ENCODE measurements at regions of chr17 and their contacts with region 1.

Region 1: GRCh38 chr17:36705874-36706731 is 104.7 kb downstream of the MRM1 start:
- DNase-seq: peak; percentile 45
- ATAC-seq: peak; percentile 54
- H3K4me3 ChIP-seq: no peak overlapping the region
- H3K4me3 Mint-ChIP-seq: no peak overlapping the region
- H3K27ac ChIP-seq: no peak overlapping the region
- H3K27ac Mint-ChIP-seq: no peak overlapping the region
- H3K4me1 ChIP-seq: no peaks in the 10 kb centered on the region
- H3K4me1 Mint-ChIP-seq: no peaks in the 10 kb centered on the region
- H3K27me3 ChIP-seq: peaks cover 0 to 26% (median 1%) of the 10 kb centered on the region in 4 experiments
- H3K27me3 Mint-ChIP-seq: peaks cover 40% of the 10 kb centered on the region
- CTCF ChIP-seq: peak; percentile 76

Region 2: DNA sequence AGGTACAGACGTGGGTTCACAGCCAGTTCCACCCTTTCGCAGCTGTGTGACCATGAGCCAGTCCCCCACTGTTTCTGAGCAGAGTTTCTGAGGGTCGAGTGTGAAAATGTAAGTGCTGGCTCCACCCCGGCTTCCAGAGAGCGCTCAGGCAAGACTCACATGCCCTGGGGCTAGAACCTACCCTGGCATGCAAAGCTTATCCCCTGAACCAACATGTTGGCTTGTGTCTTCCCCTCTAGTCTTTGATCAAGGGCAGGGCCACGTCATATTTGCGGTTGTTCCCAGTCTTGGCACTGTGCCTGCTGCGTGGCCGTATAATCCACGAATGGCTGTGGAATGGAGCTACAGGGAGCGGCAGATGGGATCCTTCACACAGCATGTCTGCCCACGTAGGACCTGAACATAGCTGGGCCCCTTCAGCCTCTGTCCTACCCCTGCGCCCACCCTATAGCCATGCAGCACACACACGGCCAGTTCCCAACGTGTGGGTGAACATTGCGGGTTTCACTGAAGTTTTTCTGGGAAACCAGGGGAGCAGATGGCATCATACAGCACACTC is 19.9 kb before region 1 on chr17:
- CTCF ChIA-PET with region 1: no interaction called
- POLR2A ChIA-PET with region 1: no interaction called
- intact Hi-C with region 1: no loop called
- DNase-seq: no peak
- ATAC-seq: no peak
- H3K4me3 ChIP-seq: no peak overlapping the region
- H3K4me3 Mint-ChIP-seq: no peak overlapping the region
- H3K27ac ChIP-seq: no peak overlapping the region
- H3K27ac Mint-ChIP-seq: no peak overlapping the region
- H3K4me1 ChIP-seq: no peaks in the 10 kb centered on the region
- H3K4me1 Mint-ChIP-seq: no peaks in the 10 kb centered on the region
- H3K27me3 ChIP-seq: peaks cover 0 to 13% (median 0%) of the 10 kb centered on the region in 4 experiments
- H3K27me3 Mint-ChIP-seq: peaks cover 40% of the 10 kb centered on the region
- CTCF ChIP-seq: no peak

Region 3: DNA sequence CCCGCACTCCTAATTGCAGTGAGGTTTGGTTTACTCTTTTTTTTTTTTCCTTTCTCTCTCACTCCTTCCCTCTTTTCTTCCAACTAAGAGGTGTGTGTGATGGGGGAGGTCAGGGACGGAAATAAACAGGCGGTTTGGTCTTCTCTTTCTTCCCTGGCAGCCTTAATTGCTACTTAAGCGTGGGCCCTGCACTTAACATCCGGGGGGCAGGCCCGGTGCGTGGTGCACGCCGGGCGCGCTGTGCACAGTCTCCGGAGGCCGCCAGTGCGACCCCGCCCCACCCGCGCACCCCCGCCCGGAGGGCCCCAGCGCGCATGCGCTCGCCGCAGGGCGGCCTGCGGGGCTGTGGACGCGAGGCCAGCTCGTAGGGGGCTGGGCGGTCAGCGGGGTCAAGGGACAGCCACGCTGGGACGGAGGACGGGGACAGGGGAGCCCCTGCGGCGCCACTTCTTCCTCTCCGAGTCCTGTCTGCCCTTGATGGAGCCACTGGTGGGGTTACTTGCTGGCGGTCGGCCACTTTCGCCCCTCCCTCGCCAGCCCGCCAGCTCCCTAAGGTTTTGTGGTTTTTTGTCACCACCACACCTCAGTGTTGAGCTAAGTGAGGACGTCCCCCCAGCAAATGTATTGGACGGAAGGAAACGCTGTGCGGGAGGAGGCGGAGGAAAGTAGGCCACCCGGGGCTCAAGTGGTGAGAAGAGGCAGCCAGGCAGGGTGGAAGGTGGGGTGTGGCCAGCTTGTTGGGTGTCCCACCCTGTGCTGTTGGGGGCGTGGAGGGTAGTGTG is 16.2 kb after region 1 on chr17:
- CTCF ChIA-PET with region 1: interaction called, 12 read pairs
- POLR2A ChIA-PET with region 1: no interaction called
- intact Hi-C with region 1: no loop called
- DNase-seq: peak; percentile 81
- ATAC-seq: peak; percentile 94
- H3K4me3 ChIP-seq: peak overlapping the region in 4 of 5 experiments; percentile 58 to 80 (median 64)
- H3K4me3 Mint-ChIP-seq: peak overlapping the region; percentile 90
- H3K27ac ChIP-seq: peak overlapping the region; percentile 62 to 77
- H3K27ac Mint-ChIP-seq: peak overlapping the region; percentile 96
- H3K4me1 ChIP-seq: peaks cover 25 to 35% of the 10 kb centered on the region in 2 donors
- H3K4me1 Mint-ChIP-seq: peaks cover 55% of the 10 kb centered on the region
- H3K27me3 ChIP-seq: peaks cover 0 to 5% (median 1%) of the 10 kb centered on the region in 4 experiments
- H3K27me3 Mint-ChIP-seq: peaks cover 9% of the 10 kb centered on the region
- CTCF ChIP-seq: no peak

Region 4: DNA sequence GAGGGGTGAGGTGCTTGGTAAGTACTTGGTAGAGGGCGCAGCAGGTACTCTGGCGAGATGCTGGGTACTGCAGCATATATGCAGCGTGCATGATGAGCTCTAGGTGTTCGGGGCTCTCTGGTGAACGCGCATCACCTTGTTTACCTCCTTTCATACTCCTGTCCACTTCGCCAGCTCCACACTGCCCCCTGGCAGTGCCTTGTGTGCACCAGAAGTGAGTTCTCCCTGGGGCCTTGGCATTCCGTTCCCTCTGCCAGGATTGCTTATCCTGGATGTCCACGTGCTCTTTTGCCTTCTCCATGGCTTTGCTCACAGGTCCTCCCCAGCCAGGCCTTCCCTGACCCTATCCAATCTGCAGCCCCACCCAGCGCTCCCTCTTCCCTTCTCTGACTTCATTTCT is 49.5 kb after region 1 on chr17:
- CTCF ChIA-PET with region 1: interaction called, 11 read pairs
- POLR2A ChIA-PET with region 1: no interaction called
- intact Hi-C with region 1: no loop called
- DNase-seq: peak; percentile 17
- ATAC-seq: no peak
- H3K4me3 ChIP-seq: no peak overlapping the region
- H3K4me3 Mint-ChIP-seq: no peak overlapping the region
- H3K27ac ChIP-seq: no peak overlapping the region
- H3K27ac Mint-ChIP-seq: no peak overlapping the region
- H3K4me1 ChIP-seq: no peaks in the 10 kb centered on the region
- H3K4me1 Mint-ChIP-seq: no peaks in the 10 kb centered on the region
- H3K27me3 ChIP-seq: peaks cover 0 to 2% (median 0%) of the 10 kb centered on the region in 4 experiments
- H3K27me3 Mint-ChIP-seq: peaks cover 30% of the 10 kb centered on the region
- CTCF ChIP-seq: no peak

Region 5: DNA sequence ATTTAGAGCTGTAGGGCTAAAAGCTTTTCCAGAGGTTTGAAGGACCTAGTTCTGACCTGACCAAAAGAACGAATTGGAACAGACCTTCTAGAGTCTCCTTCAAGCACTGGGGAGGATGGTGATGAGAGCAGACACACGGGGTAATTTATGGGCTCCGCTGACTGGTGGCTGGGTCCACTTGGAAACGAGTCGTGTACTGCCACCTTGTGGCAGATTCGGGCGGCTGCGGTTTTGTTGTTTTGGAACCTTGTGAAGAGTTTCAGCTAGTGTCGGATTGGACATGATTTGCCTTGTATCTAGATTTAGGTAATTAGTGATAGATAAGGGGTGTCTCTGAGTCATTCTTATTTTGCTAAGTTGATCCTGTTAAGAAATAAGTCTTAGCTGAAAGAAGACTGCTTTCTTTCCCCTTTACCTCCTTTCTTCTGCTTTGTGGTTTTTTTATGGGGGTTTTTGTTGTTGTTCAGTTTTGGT is 341.6 kb after region 1 on chr17:
- CTCF ChIA-PET with region 1: interaction called, 4 read pairs
- POLR2A ChIA-PET with region 1: no interaction called
- intact Hi-C with region 1: loop called (anchors 5 kb)
- DNase-seq: peak; percentile 80
- ATAC-seq: peak; percentile 62
- H3K4me3 ChIP-seq: no peak overlapping the region
- H3K4me3 Mint-ChIP-seq: no peak overlapping the region
- H3K27ac ChIP-seq: no peak overlapping the region
- H3K27ac Mint-ChIP-seq: no peak overlapping the region
- H3K4me1 ChIP-seq: peaks cover 3 to 6% of the 10 kb centered on the region in 2 donors
- H3K4me1 Mint-ChIP-seq: peaks cover 14% of the 10 kb centered on the region
- H3K27me3 ChIP-seq: no peaks in the 10 kb centered on the region
- H3K27me3 Mint-ChIP-seq: no peaks in the 10 kb centered on the region
- CTCF ChIP-seq: peak; percentile 78

Measured in B cell (primary cell).